PC-3 (cell line): ENCODE measurements at regions of chr7 and their contacts with region 1.

Region 1: DNA sequence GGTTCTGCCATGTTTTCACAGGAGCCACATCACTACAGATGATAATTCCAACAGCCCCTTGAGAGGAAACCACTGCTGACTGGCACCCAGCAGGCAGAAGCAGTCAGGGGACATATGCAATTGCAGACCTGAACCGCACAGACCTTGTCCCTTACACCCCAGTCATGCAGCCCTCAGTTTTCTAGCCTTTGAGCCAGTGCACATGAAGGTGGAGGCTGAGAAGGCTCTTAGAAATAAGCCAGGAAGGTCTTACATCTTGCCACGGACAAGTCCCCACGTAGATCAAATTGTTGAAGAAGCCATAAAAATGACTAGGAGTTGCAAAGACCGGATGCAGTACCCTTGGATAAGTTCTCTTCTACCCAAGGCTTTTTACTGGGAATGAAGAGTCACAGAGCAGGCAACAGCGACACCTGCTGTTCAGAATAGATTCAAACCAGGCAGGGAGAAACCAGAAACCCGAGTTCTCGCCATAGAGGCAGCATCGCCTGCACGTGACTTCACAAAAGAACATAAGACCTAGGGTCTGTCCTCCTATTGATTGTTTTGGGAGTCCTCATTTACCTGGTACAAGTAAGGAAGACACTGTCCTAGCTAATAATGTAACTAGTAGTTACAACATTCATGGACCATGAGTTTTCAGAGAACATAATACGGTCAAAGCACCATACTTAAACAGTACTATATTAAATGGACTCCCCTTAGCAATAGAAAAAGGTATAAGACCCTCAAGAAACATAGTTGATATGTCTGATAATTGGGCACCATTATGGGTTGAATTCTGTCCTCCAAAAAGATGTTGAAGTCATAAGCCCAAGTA is 11.1 kb downstream of the STEAP1B start:
- DNase-seq: peak; percentile 86
- ATAC-seq: peak; percentile 81
- H3K4me3 ChIP-seq: no peak overlapping the region
- H3K27ac ChIP-seq: no peak overlapping the region
- H3K4me1 ChIP-seq: peaks cover 15% of the 10 kb centered on the region
- H3K27me3 ChIP-seq: no peaks in the 10 kb centered on the region
- CTCF ChIP-seq: peak; percentile 93

Region 2: DNA sequence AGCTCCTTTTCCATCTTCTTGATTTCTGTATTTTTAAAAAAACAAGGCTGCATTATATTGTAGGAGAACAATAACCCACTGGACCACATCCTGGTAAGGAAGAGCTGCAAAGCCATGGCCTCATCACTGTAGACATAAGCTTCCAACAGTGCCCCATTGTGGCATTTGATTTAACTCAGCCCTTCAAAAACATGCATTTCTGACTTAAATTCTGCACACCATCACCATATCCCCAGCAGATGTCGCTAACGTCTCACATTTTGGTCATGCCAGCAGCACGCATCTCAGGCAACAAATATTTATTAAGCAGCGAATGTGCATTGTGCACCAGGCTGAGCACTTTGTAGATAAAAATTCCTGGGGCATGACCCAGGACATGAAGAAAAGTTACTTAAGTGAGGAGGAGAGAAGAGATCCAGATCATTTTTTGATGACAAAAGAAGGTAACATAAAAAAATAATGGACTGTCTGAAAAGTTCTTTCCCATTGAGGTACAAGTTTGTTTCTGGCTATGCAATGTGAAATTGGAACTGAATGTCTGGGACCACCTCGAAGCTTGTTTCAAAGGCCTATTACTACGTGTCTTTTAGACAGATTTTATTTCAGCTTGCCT is 378.5 kb before region 1 on chr7:
- CTCF ChIA-PET with region 1: interaction called, 4 read pairs
- POLR2A ChIA-PET with region 1: interaction called, 5 read pairs
- intact Hi-C with region 1: loop called (anchors 1 kb)
- DNase-seq: peak; percentile 84
- ATAC-seq: peak; percentile 92
- H3K4me3 ChIP-seq: no peak overlapping the region
- H3K27ac ChIP-seq: no peak overlapping the region
- H3K4me1 ChIP-seq: no peaks in the 10 kb centered on the region
- H3K27me3 ChIP-seq: no peaks in the 10 kb centered on the region
- CTCF ChIP-seq: peak; percentile 88

Region 3: DNA sequence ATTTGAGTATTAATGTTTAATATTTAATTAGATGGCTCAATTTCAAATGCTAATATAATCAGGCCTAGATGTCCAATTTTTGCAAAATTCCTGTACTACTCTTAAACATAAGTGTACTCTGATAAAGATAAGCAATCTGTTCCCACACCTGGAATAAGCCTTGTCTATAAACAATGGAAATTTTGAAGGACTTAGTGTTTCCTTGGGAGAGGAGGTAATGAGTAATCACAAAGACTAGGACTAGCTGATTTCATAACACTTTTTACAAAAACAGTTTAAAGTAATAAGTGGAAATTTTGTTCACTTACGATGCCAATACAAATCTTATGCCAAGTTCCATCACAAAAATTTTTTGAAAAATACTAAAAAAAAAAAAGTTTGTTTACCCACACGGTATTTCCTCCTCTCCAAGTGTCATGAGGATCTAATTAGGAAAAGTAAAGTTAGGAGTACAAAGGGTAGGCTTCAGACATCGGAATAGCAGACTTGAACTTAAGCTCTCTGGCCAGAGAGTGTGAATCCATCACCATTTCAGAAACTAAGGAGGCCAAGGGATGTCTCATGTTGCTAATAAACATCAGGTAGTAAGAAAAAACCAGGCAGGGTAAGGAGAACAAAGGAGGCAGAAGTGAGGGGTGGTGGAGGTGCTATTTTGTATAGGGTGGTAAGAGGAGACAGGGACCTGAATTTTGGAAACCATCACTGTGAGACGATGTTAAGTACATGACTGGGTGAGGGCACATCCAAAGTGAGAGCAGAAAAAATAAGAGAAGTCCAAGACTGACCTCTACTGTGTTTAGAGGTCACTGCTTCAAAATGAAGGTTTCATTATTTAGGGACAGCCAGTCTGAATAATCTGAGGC is 193.2 kb before region 1 on chr7:
- CTCF ChIA-PET with region 1: no interaction called
- POLR2A ChIA-PET with region 1: no interaction called
- intact Hi-C with region 1: loop called (anchors 1 kb)
- DNase-seq: no peak
- ATAC-seq: no peak
- H3K4me3 ChIP-seq: no peak overlapping the region
- H3K27ac ChIP-seq: no peak overlapping the region
- H3K4me1 ChIP-seq: no peaks in the 10 kb centered on the region
- H3K27me3 ChIP-seq: no peaks in the 10 kb centered on the region
- CTCF ChIP-seq: no peak

Region 4: GRCh38 chr7:22350466-22351328 is 138.2 kb before region 1 on chr7:
- CTCF ChIA-PET with region 1: no interaction called
- POLR2A ChIA-PET with region 1: no interaction called
- intact Hi-C with region 1: loop called (anchors 2 kb)
- DNase-seq: peak; percentile 76
- ATAC-seq: peak; percentile 67
- H3K4me3 ChIP-seq: peak overlapping the region; percentile 17; the same call in 1 of the 2 replicates
- H3K27ac ChIP-seq: peak overlapping the region; percentile 50
- H3K4me1 ChIP-seq: peaks cover 48% of the 10 kb centered on the region
- H3K27me3 ChIP-seq: no peaks in the 10 kb centered on the region
- CTCF ChIP-seq: no peak

Region 5: DNA sequence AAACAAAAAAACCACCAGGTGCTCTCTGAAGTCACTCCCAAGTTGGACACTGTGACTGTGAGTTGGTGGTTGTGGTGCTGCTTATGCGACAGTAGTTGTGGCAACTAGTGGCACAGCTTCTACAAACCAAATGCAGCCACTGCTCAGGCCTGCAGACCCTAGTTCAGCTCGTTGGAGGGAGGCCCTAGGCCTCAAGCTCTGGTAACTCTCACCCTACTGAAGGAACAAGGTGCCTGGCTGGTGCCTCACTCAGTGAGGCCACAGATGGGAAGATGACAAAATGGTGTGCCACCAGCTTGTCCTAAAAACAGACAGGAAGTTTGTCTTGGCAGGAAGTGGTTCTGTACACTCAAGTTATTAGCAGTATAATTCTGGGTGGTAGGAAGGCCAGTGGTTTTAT is 86.6 kb before region 1 on chr7:
- CTCF ChIA-PET with region 1: no interaction called
- POLR2A ChIA-PET with region 1: no interaction called
- intact Hi-C with region 1: loop called (anchors 5 kb)
- DNase-seq: peak; percentile 11
- ATAC-seq: peak; percentile 49
- H3K4me3 ChIP-seq: no peak overlapping the region
- H3K27ac ChIP-seq: peak overlapping the region; percentile 26
- H3K4me1 ChIP-seq: peaks cover 24% of the 10 kb centered on the region
- H3K27me3 ChIP-seq: no peaks in the 10 kb centered on the region
- CTCF ChIP-seq: no peak

Region 6: GRCh38 chr7:22445140-22445743 is 43.6 kb before region 1 on chr7:
- CTCF ChIA-PET with region 1: no interaction called
- POLR2A ChIA-PET with region 1: no interaction called
- intact Hi-C with region 1: loop called (anchors 2 kb)
- DNase-seq: no peak
- ATAC-seq: no peak
- H3K4me3 ChIP-seq: no peak overlapping the region
- H3K27ac ChIP-seq: peak overlapping the region; percentile 91
- H3K4me1 ChIP-seq: peaks cover 40% of the 10 kb centered on the region
- H3K27me3 ChIP-seq: no peaks in the 10 kb centered on the region
- CTCF ChIP-seq: no peak

Region 7: DNA sequence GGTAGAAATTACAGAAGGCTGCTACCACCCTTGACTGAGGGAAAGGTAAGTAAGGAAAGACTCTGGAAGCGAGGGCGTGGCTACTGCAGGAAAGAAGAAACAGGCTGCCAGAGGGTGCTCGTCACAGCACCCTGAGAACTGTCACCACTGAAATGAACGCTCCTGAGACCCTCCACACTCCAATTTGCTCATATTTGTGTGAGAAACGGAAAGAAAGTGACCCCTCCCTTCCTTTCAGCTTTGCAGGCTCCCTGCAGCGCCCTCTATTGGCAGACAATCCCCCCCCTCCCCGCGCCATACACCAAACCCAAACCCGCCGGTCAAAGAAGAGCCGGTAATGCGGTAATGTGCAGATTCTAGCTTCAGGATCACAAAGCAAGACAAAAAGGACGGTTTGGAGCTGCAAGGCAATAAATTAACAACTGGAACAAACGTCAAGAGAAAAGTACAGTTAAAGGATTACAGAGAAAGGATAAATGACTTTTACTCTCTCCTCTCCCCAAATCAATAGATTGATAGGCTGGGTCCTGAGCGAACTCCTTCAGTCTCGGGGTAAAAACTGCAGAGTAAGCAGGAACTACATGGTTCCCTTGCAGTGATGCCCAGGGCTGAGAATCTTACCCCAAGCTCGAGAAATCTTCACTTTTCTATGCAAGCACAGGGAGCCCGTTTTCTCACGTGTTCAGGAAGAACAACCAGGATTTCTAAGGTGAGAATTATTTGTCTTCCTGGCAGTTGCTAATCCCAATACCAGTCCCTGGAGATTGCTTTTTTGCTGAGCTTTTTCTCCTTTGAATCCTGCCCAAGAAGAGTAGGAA is 36.5 kb before region 1 on chr7:
- CTCF ChIA-PET with region 1: no interaction called
- POLR2A ChIA-PET with region 1: no interaction called
- intact Hi-C with region 1: loop called (anchors 2 kb)
- DNase-seq: peak; percentile 73
- ATAC-seq: peak; percentile 87
- H3K4me3 ChIP-seq: peak overlapping the region; percentile 62
- H3K27ac ChIP-seq: no peak overlapping the region
- H3K4me1 ChIP-seq: peaks cover 7% of the 10 kb centered on the region; the same call in 1 of the 2 replicates
- H3K27me3 ChIP-seq: no peaks in the 10 kb centered on the region
- CTCF ChIP-seq: peak; percentile 91